ENCODE measurements at regions of chr17 and their contacts with region 1.

Region 1: GRCh38 chr17:50026901-50027630 is 28.8 kb upstream of the ITGA3 start:
- DNase-seq: peak; percentile 80
- H3K4me3 Mint-ChIP-seq: no peak overlapping the region
- H3K27ac Mint-ChIP-seq: no peak overlapping the region
- H3K4me1 Mint-ChIP-seq: peaks cover 19% of the 10 kb centered on the region
- H3K27me3 Mint-ChIP-seq: peaks cover 25% of the 10 kb centered on the region

Region 2: DNA sequence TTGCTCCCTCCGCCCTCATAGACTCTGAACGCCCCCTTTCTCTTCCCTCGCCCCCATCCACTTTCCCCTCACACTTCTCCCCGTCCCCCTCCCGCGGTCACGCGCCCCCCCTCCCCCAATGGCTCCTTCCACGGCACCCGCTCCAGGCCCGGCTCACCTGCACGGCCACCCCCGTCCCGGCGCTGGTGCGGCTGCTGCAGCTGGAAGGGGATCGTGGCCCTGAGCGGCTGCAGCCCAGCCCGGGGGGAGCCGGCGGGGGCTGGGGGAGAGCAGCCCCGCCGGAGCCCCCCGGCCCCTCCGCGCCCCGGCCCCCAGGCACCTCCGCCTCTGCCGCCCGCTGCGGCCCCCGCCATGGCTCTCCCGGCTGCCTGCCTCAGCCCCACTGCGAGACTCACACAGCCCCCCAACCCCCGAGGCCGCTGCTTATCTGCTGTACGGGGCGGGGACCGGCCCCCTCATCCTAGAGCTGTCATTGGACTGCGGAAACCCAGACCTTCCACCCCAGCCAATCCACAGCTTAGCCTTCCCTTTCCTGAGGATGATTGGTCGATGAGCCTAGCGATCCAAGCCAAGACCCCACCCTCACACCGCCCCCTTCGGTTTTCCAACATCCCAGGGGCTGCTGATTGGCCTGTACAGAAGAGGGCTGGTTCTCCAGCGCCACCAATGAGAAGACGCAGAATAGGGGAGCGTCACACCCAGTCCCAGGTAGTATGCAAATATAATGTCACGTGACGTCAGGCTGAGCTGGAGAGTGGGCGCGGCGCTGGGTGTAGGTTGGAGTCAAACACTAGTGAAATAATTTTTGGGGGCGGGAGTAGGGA is 263.1 kb before region 1 on chr17 and contains the start of gene FAM117A:
- CTCF ChIA-PET with region 1: no interaction called
- POLR2A ChIA-PET with region 1: no interaction called
- DNase-seq: peak; percentile 99
- H3K4me3 Mint-ChIP-seq: peak within 1 kb of the TSS; percentile 93
- H3K27ac Mint-ChIP-seq: peak within 1 kb of the TSS; percentile 78
- H3K4me1 Mint-ChIP-seq: peaks cover 54% of the 10 kb centered on the region
- H3K27me3 Mint-ChIP-seq: peaks cover 31% of the 10 kb centered on the region
- total RNA-seq, gene FAM117A: 61.0 to 62.0 TPM

Region 3: GRCh38 chr17:50055426-50056230 is 28.6 kb after region 1 on chr17 and contains the start of gene ITGA3:
- CTCF ChIA-PET with region 1: interaction called, 13 read pairs
- POLR2A ChIA-PET with region 1: interaction called, 4 read pairs
- DNase-seq: peak; percentile 71
- H3K4me3 Mint-ChIP-seq: peak within 1 kb of the TSS; percentile 88
- H3K27ac Mint-ChIP-seq: peak within 1 kb of the TSS; percentile 24
- H3K4me1 Mint-ChIP-seq: peaks cover 50% of the 10 kb centered on the region
- H3K27me3 Mint-ChIP-seq: peaks cover 8% of the 10 kb centered on the region
- total RNA-seq, gene ITGA3: 12.5 to 13.4 TPM

Region 4: GRCh38 chr17:50079334-50080095 is 52.4 kb after region 1 on chr17:
- CTCF ChIA-PET with region 1: interaction called, 10 read pairs
- POLR2A ChIA-PET with region 1: no interaction called
- DNase-seq: peak; percentile 38
- H3K4me3 Mint-ChIP-seq: no peak overlapping the region
- H3K27ac Mint-ChIP-seq: no peak overlapping the region
- H3K4me1 Mint-ChIP-seq: no peaks in the 10 kb centered on the region
- H3K27me3 Mint-ChIP-seq: no peaks in the 10 kb centered on the region

Region 5: DNA sequence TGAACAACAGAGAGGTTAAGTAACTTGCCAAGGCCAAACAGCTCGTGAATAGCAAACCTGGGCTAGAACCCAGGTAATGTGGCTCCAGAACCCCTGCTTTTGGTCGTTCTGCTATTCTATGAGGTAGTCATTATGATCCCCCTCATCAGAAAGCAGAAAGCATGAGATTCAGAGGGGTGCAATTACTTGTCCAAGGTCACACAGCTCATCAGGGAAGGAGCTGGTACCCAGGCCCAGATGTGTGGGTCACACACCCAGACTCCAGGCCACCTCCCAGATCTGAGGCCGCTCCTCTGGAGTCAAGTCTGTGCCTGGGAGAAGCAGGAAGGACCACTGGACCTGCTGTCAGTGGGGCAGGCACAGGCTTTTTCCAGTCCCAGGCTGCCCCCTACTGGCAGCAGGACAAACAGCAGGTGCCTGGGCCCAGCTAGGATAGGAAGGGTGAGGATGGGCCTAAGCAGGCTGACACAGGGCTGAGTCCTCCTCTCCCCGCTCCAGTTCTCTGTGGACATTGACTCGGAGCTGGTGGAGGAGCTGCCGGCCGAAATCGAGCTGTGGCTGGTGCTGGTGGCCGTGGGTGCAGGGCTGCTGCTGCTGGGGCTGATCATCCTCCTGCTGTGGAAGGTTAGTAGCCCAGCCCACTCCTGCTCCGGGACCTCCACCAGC is 60.3 kb after region 1 on chr17:
- CTCF ChIA-PET with region 1: interaction called, 73 read pairs
- POLR2A ChIA-PET with region 1: no interaction called
- DNase-seq: peak; percentile 83
- H3K4me3 Mint-ChIP-seq: no peak overlapping the region
- H3K27ac Mint-ChIP-seq: no peak overlapping the region
- H3K4me1 Mint-ChIP-seq: no peaks in the 10 kb centered on the region
- H3K27me3 Mint-ChIP-seq: no peaks in the 10 kb centered on the region

Measured in activated CD4-positive, alpha-beta memory T cell treated with anti-CD3 and anti-CD28 coated beads, Interleukin-2, amount 10 ng/mL, durations not matched to agents 7 days and 5 days (primary cell).